ENCODE measurements at regions of chr19 and their contacts with region 1.

Region 1: DNA sequence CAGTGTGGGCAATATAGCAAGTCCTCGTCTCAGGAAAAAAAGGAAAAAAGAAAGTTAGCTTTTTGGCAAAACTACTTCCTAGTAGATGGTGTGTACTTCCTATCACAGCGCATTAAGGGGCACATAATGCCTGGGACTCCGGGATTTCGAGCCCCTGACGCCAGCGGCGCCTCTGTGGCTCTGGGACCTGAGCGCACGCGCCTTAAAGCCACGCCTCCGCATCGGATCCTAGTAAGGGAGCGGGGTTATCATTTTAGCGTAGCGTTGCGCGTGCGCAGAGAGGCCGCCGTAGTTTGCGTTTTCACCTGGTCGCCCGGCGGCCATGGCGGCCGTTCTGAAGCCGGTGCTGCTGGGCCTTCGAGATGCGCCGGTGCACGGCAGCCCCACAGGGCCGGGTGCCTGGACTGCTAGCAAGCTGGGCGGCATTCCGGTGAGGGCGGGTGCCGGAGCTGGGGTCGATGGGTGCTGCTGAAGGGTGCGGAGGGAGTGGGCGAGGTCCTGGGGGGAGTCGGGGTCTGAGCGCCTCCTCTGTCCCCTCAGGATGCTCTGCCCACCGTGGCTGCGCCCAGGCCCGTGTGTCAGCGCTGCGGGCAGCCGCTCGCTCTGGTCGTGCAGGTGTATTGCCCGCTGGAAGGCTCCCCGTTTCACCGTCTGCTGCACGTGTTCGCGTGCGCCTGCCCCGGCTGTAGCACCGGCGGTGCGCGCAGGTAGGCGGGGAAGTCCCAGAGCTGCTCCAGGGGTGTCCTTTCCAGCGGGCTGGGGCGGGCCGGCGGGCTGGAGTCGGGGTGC is at the start of gene PDCD2L:
- DNase-seq: peak; percentile 81
- H3K4me3 ChIP-seq: peak within 1 kb of the TSS; percentile 62 to 90 (median 83)
- H3K27ac ChIP-seq: peak within 1 kb of the TSS; percentile 69
- H3K4me1 ChIP-seq: no peaks in the 10 kb centered on the region
- H3K27me3 ChIP-seq: no peaks in the 10 kb centered on the region
- CTCF ChIP-seq: no peak
- total RNA-seq, gene PDCD2L: 5.2 to 17.2 TPM

Region 2: DNA sequence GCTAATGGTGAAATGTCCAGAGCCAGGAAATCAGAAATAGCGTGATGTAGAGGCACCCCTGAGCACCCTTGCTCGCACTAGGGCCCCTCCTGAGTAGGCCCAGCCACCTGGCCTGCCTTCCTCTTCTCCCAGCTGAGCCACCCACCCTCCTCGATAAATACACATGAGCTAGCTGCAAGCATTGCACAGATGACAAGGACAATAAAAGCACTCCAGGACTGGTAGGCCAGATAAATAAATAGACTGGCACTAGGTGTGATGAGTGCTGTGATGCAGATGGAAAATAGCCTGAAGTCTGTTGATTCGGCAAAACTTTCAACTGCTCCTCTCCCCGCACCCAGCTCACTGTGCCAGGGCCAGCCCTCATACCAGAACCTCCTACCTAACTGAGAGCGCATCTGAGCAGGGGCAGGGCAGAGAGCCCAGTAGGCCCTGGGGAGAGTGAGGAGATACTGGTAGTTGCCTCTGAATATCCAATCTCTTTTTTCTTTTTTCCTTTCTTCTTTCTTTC is 93.8 kb before region 1 on chr19:
- CTCF ChIA-PET with region 1: no interaction called
- dilution Hi-C with region 1: no loop called
- in situ Hi-C with region 1: no loop called
- intact Hi-C with region 1: no loop called
- DNase-seq: no peak
- H3K4me3 ChIP-seq: no peak overlapping the region
- H3K27ac ChIP-seq: no peak overlapping the region
- H3K4me1 ChIP-seq: no peaks in the 10 kb centered on the region
- H3K27me3 ChIP-seq: no peaks in the 10 kb centered on the region
- CTCF ChIP-seq: no peak

Region 3: DNA sequence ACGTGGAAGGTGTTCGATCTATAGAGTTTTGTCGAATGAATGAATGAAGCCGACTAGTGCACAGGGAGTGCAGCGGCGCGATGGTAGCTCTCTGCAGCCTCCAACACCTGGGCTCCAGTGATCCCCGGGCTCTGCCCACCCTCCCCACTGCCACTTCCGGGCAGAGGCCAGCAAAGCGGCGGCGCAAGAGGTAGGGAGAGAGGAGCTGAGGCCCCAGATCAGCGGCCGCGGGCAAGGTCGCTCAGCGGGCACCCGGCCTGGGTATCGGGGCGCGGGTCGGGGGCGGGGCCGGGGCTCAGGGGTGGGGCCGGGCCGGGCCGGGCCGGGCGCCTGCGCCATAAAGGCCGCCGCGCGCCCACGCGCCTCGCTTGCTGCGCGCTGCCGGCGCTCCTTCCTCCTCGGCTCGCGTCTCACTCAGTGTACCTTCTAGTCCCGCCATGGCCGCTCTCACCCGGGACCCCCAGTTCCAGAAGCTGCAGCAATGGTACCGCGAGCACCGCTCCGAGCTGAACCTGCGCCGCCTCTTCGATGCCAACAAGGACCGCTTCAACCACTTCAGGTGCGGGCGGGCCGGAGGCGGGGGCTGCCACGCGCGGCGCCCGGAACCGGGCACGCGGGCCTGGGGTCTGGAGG is 39.4 kb before region 1 on chr19 and contains the start of gene GPI:
- CTCF ChIA-PET with region 1: no interaction called
- dilution Hi-C with region 1: no loop called
- in situ Hi-C with region 1: no loop called
- intact Hi-C with region 1: loop called (anchors 1 kb)
- DNase-seq: peak; percentile 53
- H3K4me3 ChIP-seq: peak within 1 kb of the TSS; percentile 83 to 92 (median 89)
- H3K27ac ChIP-seq: peak within 1 kb of the TSS; percentile 49
- H3K4me1 ChIP-seq: peaks cover 21% of the 10 kb centered on the region
- H3K27me3 ChIP-seq: no peaks in the 10 kb centered on the region
- CTCF ChIP-seq: no peak
- total RNA-seq, gene GPI: 131 to 411 TPM

Region 4: DNA sequence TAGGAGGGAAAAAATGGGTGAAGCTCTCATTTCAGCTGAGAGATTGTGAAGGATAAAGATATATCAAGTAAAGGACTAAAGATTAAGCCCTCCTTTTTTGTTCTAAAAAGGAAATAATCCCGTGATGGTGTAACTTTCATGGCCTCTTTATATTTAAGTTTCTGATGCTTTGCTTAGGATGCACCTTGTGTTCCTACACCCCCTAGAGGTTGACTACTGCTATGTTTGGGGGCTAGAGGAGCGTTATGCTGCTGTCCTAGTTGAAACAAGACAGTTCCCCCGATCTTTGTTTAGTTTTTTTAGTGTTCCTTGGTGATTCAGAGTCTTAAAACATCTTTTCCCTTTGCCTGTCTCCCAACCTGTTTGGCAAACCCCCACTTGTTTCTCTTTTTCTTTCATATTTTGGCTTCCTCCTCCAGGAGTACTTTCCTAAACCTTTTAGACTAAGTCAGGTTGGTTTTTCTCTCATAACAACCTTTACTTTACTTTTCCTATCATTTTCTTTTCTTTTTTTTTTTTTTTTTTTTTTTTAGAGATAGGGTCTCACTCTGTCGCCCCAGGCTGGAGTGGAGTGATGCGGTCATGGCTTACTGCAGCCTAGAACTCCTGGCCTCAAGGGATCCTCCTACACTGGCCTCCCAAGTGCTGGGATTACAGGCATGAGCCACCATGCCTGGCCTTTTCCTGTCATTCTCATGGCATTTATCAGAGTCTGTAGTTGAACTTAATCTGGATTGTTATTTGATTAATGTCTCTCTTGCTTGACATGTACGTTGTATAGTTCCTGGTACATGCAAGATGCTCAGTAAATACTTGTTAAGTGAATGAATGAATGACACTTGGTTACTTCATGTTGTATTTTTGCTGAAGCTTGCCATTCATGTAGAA is 26.7 kb after region 1 on chr19:
- CTCF ChIA-PET with region 1: no interaction called
- dilution Hi-C with region 1: no loop called
- in situ Hi-C with region 1: no loop called
- intact Hi-C with region 1: loop called (anchors 1 kb)
- DNase-seq: peak; percentile 45
- H3K4me3 ChIP-seq: peak overlapping the region in 2 of 3 experiments; percentile 79 to 90
- H3K27ac ChIP-seq: no peak overlapping the region
- H3K4me1 ChIP-seq: peaks cover 24% of the 10 kb centered on the region
- H3K27me3 ChIP-seq: no peaks in the 10 kb centered on the region
- CTCF ChIP-seq: peak; percentile 77 to 82

Region 5: DNA sequence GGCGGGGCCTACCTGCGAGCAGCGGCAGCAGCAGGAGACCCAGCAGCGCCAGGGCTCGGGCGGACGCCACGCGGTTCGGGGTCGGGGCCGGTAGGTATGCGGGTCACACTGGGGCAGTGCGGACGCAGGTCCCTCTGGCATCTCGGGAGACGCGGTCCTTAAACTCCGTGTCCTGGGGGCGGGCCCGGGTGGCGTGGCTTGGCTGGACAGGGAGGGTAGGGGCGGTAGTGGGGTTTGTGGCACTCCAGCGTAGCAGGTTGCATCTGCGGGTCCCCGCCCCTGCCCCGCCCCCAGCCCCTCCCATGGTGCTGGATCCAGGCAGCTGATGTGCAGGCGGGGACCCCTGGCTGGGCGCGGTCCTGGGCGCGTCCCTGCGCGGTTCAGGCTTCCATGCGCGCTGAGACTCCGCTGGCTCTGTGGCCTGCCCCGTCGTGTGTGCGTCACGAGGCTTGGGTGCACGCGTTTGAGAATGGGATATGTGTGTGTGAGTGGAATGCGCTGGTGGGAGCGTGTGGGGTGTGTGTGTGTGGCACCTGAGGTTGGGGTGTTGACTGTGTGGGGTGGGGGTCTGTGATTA is 173.3 kb after region 1 on chr19:
- CTCF ChIA-PET with region 1: no interaction called
- dilution Hi-C with region 1: no loop called
- in situ Hi-C with region 1: no loop called
- intact Hi-C with region 1: no loop called
- DNase-seq: no peak
- H3K4me3 ChIP-seq: no peak overlapping the region
- H3K27ac ChIP-seq: no peak overlapping the region
- H3K4me1 ChIP-seq: no peaks in the 10 kb centered on the region
- H3K27me3 ChIP-seq: no peaks in the 10 kb centered on the region
- CTCF ChIP-seq: no peak

Region 6: DNA sequence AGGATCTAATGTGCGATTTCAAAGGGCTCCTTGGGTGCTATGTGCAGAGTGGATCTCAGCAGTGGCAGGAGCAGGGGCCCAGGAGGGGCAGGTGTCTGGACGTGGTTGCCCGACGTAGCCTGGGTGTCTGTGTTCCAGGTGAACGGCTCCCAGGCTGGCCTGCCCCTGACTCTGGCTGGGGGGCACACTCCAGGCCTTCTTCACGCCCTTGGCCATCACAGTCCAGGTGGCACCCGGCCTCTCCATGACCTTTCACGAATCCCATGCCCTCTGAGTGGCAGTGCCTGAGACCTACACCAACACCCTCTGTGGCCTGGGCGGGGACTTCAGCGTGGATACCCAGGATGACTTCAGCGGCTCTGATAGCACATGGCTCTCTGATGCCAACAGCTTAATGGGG is 700.1 kb after region 1 on chr19:
- CTCF ChIA-PET with region 1: interaction called, 30 read pairs
- dilution Hi-C with region 1: no loop called
- in situ Hi-C with region 1: no loop called
- intact Hi-C with region 1: no loop called
- DNase-seq: no peak
- H3K4me3 ChIP-seq: no peak overlapping the region
- H3K27ac ChIP-seq: no peak overlapping the region
- H3K4me1 ChIP-seq: peaks cover 24% of the 10 kb centered on the region
- H3K27me3 ChIP-seq: no peaks in the 10 kb centered on the region
- CTCF ChIP-seq: no peak